ENCODE measurements at regions of chr14 and their contacts with region 1.

Region 1: DNA sequence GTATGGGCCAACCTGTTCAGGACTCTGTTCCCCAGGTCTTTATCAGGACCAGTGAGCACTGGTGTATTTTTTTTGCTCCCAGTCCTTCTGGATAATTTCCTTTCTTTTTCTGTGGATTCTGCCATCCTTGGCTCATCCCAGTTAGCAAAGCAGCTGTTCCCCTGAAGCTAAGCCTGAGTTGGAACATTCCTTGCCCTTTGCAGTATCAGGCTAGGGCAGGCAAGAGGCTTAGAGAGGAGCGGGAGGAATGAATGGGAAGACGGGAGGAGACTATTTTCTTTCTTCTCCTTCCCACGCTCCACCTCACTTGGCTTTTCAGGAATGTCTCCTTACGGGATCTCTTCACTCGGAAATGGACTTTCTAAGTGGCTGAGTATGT is 29.2 kb downstream of the ERG28 start:
- DNase-seq: no peak
- ATAC-seq: no peak
- H3K4me3 ChIP-seq: no peak overlapping the region
- H3K27ac ChIP-seq: no peak overlapping the region
- H3K4me1 ChIP-seq: peaks cover 0 to 7% (median 0%) of the 10 kb centered on the region in 12 donors
- H3K27me3 ChIP-seq: no peaks in the 10 kb centered on the region
- CTCF ChIP-seq: no peak
- POLR2A ChIP-seq: no peak

Region 2: DNA sequence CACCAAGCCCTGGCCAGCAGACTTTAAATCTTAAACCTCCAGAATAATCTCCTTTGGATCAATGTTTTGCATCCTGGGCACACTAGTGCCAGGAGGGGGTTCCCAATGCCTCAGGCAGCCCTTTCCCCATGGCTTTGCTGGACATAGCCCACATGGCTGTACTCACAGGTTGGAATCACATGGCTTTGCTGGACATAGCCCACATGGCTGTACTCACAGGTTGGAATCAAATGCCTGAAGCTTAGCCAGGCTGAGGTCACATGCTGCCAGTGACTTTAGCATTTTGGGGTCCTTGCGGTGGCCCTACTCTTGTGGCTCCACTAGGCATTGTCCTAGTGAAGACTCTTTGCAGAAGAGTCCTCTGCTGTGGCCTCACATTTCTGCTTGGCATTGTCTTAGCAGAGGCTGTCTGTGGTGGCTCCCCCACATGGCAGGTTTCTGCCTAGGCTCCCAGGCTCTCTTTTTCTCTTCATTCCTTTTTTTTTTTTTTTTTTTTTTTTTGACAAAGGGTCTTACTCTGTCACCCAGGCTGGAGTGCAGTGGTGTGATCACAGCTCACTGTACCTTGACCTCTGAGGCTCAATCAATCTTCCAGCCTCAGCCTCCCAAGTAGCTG is 40.0 kb before region 1 on chr14:
- intact Hi-C with region 1: loop called in 2 of 10 experiments (anchors 5 kb)
- DNase-seq: no peak
- ATAC-seq: no peak
- H3K4me3 ChIP-seq: no peak overlapping the region
- H3K27ac ChIP-seq: no peak overlapping the region
- H3K4me1 ChIP-seq: peaks cover 0 to 25% (median 0%) of the 10 kb centered on the region in 12 donors
- H3K27me3 ChIP-seq: no peaks in the 10 kb centered on the region
- CTCF ChIP-seq: no peak
- POLR2A ChIP-seq: no peak

Region 3: DNA sequence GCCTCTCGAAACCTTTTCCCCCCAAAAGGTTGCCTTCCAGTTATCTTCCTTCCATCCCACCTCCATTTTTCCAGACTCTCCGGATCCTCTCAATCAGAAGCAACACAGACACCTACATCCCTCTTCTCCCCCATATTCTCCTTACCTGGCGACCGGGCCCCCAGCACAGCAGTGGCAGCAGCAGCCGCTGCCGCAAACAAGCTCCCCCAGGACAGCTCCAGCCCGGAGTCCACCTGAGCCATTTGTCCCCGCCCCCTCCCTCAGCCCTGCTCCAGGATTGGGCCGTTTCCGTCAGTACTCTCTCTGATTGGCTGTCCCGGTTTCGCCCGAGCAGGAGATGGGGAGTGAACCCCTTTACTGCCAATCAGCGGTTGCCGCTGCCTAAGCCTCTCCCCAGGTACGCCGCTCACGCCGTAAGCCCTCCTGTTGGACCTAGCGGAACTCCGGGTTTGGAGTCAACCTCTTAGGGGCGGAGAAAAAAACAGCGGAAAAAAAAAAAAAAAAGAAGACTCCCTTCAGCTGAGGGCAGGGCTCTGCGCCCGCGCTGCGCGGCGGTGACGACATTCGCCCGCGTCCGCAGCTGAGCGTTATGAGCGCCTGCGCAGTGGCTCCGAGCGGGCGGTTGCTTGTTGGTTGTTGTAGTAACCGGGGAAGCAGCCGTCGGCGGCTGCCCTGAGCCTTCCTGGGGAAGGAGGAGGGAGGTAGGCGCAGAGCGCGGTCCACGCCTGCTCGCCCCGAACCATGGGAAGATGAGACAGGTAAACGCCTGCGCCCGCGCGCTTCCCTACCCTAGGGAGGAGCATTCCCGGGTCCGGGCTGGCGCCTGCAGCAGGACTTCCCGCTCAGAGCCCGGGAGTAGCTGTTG is 29.4 kb after region 1 on chr14 and contains the starts of genes ERG28 and TTLL5:
- intact Hi-C with region 1: no loop called
- DNase-seq: peak; percentile 96 to 98 (median 97)
- ATAC-seq: peak; percentile 98 to 99 (median 98)
- H3K4me3 ChIP-seq: peak within 1 kb of the TSS; percentile 53 to 98 (median 84)
- H3K27ac ChIP-seq: peak within 1 kb of the TSS in 11 of 12 donors; percentile 75 to 89 (median 83)
- H3K4me1 ChIP-seq: peaks cover 0 to 31% (median 14%) of the 10 kb centered on the region in 12 donors
- H3K27me3 ChIP-seq: no peaks in the 10 kb centered on the region
- CTCF ChIP-seq: no peak
- POLR2A ChIP-seq: peak in 1 of 2 donors; percentile 58
- total RNA-seq, gene ERG28: 5.7 to 9.2 (median 7.4) TPM
- total RNA-seq, gene TTLL5: 13.8 to 24.6 (median 18.2) TPM

Region 4: GRCh38 chr14:76305268-76305826 is 673.9 kb after region 1 on chr14:
- intact Hi-C with region 1: no loop called
- DNase-seq: no peak
- ATAC-seq: no peak
- H3K4me3 ChIP-seq: no peak overlapping the region
- H3K27ac ChIP-seq: no peak overlapping the region
- H3K4me1 ChIP-seq: peaks cover 0 to 9% (median 6%) of the 10 kb centered on the region in 12 donors
- H3K27me3 ChIP-seq: no peaks in the 10 kb centered on the region
- CTCF ChIP-seq: no peak
- POLR2A ChIP-seq: no peak